ENCODE measurements at regions of chr15 and their contacts with region 1.

Region 1: DNA sequence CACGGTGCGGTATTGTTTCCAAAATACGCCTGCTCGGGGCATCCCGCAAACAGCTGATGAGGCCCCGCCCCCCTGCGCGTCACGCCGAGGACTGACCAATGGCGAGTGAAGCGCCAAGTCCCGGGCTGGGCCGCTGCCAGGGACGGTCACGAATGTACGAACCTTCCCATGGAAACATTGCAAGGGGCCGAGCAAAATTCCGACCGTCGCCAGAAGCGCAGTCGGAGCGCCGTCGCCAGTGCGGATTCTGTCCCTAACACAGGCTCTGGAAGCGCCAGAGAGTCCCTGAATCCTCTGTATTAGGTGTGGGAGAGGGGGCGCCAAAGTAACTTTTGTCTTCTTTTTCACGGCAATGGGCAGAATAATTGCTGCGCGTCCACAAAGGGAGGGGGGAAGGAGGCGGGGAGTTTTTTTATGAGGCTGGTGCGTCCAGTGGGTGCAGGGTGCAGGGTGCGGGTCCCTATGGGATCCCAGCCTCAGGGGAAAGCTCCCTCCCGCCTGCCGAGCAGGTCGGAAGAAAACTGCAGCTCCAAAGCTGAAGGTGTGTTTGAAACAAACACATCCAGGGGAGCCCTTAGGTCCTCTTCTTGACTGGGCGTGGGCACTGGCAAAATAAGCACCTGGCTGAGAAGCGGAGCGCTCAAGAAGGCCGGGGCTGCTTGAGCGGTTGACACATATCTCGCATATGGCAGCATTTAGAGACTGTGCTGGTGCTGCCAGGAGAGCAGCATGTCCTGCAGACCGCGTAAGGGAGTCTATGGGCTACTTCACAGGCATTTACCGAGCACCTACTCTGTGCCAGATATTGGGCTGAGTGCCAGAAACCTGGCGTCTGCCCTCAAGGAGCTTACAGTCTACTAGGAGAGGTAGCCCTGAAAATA is at the start of gene BMF:
- DNase-seq: peak; percentile 98
- ATAC-seq: peak; percentile 72
- H3K4me3 Mint-ChIP-seq: peak within 1 kb of the TSS; percentile 81
- H3K27ac Mint-ChIP-seq: peak within 1 kb of the TSS; percentile 58
- H3K4me1 Mint-ChIP-seq: peaks cover 50% of the 10 kb centered on the region
- H3K27me3 Mint-ChIP-seq: peaks cover 12% of the 10 kb centered on the region
- CTCF ChIP-seq: no peak
- total RNA-seq, gene BMF: 4.2 to 4.3 TPM

Region 2: DNA sequence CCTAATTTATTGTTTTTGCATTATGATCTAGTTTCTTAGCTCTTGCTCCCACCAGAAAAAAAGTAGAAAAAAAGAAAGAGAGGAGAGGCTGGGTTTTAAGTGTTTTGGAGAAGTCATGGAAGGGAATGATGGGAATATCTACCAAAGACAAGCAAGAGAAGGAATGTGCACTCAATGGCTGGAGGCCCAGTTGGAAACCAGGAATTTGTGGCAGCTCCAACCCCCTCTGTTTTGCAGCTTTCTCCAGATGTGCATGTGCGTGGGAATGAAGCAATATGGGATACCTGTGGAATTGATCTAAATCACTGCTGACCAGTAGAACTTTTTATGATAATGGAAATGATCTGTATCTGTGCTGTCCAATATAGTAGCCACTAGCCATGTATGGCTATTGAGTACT is 148.0 kb before region 1 on chr15:
- CTCF ChIA-PET with region 1: no interaction called
- POLR2A ChIA-PET with region 1: no interaction called
- intact Hi-C with region 1: no loop called
- DNase-seq: no peak
- ATAC-seq: no peak
- H3K4me3 Mint-ChIP-seq: no peak overlapping the region
- H3K27ac Mint-ChIP-seq: no peak overlapping the region
- H3K4me1 Mint-ChIP-seq: no peaks in the 10 kb centered on the region
- H3K27me3 Mint-ChIP-seq: no peaks in the 10 kb centered on the region
- CTCF ChIP-seq: no peak

Region 3: DNA sequence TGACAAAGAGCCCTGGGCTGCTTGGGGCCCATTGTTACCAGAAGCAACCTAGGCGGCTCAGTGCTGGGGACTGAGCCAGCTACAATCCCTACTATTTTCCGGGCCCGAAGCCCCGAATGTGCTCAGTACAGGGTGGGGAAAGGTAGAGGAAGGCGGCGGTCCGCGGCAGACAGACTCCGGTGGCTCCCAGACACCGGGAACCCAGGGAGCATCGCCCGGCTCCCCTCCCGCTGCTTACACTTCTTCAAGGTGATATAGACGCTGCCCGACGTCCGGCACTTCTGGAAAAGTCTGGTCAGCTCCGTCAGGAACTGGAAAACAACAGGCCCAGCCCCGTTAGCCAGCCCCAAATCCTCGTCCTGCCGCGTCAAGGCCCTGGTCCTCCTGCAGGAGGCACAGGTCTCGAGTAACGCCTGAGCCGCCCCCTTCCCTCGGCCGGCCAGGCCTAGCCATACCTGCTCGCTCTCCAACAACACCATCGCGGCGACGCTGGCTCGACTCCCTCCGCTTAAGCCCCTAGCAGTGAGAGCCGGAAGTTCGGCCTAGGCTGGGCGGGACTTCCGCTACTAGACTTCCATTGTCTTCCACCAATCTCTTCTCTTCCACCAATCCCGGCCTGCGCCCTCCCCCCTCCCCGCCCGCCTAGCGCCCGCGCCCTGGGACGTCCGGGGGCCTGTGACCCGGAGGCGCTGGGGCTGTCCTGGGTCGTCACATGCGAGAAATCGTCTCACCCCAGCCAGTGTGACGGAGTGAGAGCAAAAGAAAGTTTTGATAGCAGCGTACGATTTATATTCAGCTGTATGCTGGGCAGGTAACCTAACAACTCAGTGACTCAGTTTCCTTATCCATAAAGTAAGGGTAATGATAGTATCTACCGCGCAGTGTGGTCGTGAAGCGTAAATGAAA is 70.2 kb before region 1 on chr15 and contains the start of gene SRP14:
- CTCF ChIA-PET with region 1: interaction called, 198 read pairs
- POLR2A ChIA-PET with region 1: interaction called, 9 read pairs
- intact Hi-C with region 1: loop called (anchors 2 kb)
- DNase-seq: peak; percentile 97
- ATAC-seq: peak; percentile 95
- H3K4me3 Mint-ChIP-seq: peak within 1 kb of the TSS; percentile 99
- H3K27ac Mint-ChIP-seq: peak within 1 kb of the TSS; percentile 94
- H3K4me1 Mint-ChIP-seq: peaks cover 54% of the 10 kb centered on the region
- H3K27me3 Mint-ChIP-seq: no peaks in the 10 kb centered on the region
- CTCF ChIP-seq: no peak
- total RNA-seq, gene SRP14: 147 to 152 TPM

Region 4: DNA sequence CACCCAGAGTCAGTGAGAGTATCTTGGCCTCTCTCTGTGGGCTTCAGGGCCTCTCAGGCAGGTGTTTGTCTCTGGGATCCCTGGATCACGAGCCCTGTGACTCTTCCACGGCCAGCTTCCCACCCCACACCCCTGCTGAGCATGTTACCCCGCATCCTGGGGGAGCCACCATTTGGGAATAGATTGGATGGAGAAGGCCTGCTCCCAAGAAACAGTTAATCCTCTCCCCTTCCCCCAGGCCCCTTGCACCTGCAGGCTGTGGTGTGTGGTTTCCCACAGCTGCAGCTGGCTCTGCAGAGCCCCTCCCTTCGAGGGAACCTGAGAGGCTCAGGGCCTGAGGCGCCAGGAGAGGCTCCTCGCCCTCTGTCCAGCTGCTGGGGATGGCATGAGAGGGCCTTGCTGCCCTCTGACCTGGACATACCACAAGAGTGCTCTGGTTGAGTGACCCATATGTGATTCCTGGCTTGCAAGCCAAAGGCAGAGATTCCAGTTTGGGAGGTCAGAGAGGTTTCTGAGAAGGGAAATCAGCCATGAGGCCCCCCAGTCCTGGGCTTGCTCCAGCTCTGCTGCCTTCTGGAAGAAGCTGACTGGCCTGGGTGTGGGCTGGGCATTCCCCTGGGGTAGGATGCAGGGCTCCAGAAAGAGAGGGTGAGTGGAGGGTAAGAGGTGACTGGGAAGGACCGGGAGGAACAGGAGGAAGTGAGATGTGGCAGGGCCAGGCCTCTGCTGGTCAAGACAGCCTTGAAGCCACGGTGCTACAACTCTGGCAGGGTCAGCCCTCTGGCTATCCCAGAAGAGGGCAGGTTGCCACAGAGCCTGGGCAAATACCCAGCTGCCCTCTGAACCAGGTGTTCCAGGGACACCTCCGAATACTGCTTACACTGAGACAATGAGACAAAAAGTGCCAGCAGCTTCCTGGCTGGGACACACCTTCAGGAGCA is 54.2 kb before region 1 on chr15:
- CTCF ChIA-PET with region 1: interaction called, 198 read pairs
- POLR2A ChIA-PET with region 1: interaction called, 4 read pairs
- intact Hi-C with region 1: no loop called
- DNase-seq: peak; percentile 70
- ATAC-seq: peak; percentile 48
- H3K4me3 Mint-ChIP-seq: peak overlapping the region; percentile 19
- H3K27ac Mint-ChIP-seq: peak overlapping the region; percentile 78
- H3K4me1 Mint-ChIP-seq: peaks cover 77% of the 10 kb centered on the region
- H3K27me3 Mint-ChIP-seq: no peaks in the 10 kb centered on the region
- CTCF ChIP-seq: no peak

Region 5: DNA sequence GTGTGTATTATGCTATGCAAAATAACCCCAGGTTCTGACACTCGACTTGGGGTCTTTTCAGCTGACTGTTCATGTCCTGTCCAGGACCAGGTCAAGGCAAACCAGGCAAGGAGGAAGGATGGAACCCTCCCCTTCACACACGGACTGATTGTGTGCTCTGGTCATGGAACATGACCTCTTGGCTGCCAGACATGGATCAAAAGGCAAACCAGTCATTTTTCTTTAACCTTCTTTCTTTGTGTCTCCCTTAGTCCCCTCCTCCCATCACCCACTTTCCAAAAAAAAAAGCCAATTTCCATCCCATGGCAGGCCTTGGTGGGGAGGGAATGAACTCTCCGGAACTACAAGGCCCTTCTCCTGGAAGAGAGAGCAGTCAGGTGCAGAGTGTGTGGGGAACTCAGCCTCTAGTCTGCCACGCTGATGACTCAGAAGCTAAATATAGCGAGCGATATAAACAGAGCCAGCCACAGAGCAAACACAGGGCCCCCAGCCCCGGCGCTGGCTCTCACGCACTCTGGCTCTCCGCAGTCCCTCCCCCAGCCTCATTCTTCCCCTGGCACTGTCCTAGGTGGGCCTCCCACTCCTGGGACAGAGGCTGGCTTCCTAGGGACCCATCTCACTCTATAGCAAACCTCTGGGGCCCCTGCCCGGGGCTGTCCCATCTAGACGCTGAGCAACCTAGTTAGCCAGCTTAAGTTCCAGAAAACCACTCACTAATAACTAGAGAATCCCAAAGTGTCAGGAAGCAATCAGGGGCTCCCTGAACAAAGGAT is 10.4 kb before region 1 on chr15:
- CTCF ChIA-PET with region 1: interaction called, 176 read pairs
- POLR2A ChIA-PET with region 1: interaction called, 13 read pairs
- intact Hi-C with region 1: no loop called
- DNase-seq: peak; percentile 87
- ATAC-seq: peak; percentile 95
- H3K4me3 Mint-ChIP-seq: peak overlapping the region; percentile 44
- H3K27ac Mint-ChIP-seq: peak overlapping the region; percentile 97
- H3K4me1 Mint-ChIP-seq: peaks cover 72% of the 10 kb centered on the region
- H3K27me3 Mint-ChIP-seq: peaks cover 3% of the 10 kb centered on the region
- CTCF ChIP-seq: no peak

Region 6: DNA sequence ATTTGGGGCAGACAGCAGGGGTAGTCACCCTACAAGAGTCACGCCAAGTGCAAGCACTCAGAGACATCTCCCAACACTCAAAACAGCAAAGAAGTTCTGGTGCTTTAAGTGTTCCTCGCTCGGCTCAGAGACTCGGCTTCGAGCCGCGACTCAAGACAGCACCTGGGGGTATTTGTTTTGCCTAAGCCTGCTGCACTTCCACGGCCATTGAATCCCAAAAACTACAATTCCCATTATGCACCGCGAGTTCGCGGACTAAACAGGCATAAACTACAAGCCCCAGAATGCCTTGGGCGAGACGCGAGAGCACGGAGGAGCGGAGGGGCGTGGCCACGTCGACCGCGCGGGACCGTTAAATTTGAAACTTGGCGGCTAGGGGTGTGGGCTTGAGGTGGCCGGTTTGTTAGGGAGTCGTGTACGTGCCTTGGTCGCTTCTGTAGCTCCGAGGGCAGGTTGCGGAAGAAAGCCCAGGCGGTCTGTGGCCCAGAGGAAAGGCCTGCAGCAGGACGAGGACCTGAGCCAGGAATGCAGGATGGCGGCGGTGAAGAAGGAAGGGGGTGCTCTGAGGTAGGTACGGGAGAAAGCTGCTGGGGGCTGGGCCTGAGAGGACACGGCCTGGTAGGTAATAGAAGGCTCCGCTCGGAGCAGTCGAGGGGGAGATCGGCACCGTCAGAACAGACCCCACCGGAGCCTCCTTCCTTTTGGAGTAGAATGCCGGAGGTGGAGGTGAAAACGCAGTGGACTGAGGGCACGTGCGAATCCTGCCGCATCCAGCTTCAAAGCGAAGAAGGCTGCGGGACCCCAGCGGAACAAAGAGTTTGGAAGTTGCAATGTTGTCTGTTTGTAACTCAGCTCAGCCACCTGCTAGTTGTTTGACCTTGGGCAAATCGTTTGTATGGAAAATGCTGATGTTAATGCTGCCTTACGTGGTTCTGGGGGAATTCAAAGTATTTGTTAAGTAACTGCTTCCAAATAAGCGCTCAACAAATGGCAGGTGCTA is 51.9 kb after region 1 on chr15 and contains the start of gene BUB1B:
- CTCF ChIA-PET with region 1: interaction called, 26 read pairs
- POLR2A ChIA-PET with region 1: interaction called, 5 read pairs
- intact Hi-C with region 1: no loop called
- DNase-seq: peak; percentile 97
- ATAC-seq: peak; percentile 96
- H3K4me3 Mint-ChIP-seq: no peak within 1 kb of the TSS
- H3K27ac Mint-ChIP-seq: no peak within 1 kb of the TSS
- H3K4me1 Mint-ChIP-seq: peaks cover 4% of the 10 kb centered on the region
- H3K27me3 Mint-ChIP-seq: no peaks in the 10 kb centered on the region
- CTCF ChIP-seq: no peak
- total RNA-seq, gene BUB1B: 79.6 to 82.5 TPM

Region 7: GRCh38 chr15:40190591-40190990 is 81.5 kb after region 1 on chr15:
- CTCF ChIA-PET with region 1: no interaction called
- POLR2A ChIA-PET with region 1: no interaction called
- intact Hi-C with region 1: no loop called
- DNase-seq: no peak
- ATAC-seq: no peak
- H3K4me3 Mint-ChIP-seq: no peak overlapping the region
- H3K27ac Mint-ChIP-seq: no peak overlapping the region
- H3K4me1 Mint-ChIP-seq: no peaks in the 10 kb centered on the region
- H3K27me3 Mint-ChIP-seq: no peaks in the 10 kb centered on the region
- CTCF ChIP-seq: no peak